Activated CD4-positive, alpha-beta T cell treated with anti-CD3 and anti-CD28 coated beads for 36 hours (primary cell): ENCODE measurements at regions of chr10 and their contacts with region 1.

Region 1: GRCh38 chr10:97278491-97278989 is 13.9 kb downstream of the ARHGAP19 start:
- DNase-seq: no peak
- ATAC-seq: peak; percentile 64
- H3K4me3 Mint-ChIP-seq: no peak overlapping the region
- H3K27ac Mint-ChIP-seq: no peak overlapping the region
- H3K4me1 Mint-ChIP-seq: peaks cover 22% of the 10 kb centered on the region
- H3K27me3 Mint-ChIP-seq: no peaks in the 10 kb centered on the region

Region 2: DNA sequence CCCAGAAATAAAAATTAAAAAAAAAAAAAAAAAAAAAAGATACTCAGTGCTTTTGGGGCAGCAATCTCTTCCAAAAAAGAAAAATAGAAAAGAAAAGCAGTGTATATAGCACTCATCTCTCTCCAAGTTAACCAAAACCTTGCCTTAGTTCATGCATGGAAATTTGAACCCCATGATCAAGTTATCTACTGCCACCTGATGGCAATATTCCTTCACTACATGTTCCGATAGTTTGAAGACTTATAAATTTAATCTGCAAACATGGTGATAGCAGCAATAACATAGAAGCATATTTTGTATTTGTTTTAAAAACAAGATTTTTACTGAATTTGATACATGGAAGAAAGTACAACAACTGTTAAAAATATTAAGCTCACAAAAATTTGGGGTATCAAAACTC is 44.1 kb before region 1 on chr10:
- CTCF ChIA-PET with region 1: interaction called, 14 read pairs
- POLR2A ChIA-PET with region 1: no interaction called
- intact Hi-C with region 1: no loop called
- DNase-seq: no peak
- ATAC-seq: no peak
- H3K4me3 Mint-ChIP-seq: no peak overlapping the region
- H3K27ac Mint-ChIP-seq: no peak overlapping the region
- H3K4me1 Mint-ChIP-seq: peaks cover 17% of the 10 kb centered on the region
- H3K27me3 Mint-ChIP-seq: no peaks in the 10 kb centered on the region

Region 3: DNA sequence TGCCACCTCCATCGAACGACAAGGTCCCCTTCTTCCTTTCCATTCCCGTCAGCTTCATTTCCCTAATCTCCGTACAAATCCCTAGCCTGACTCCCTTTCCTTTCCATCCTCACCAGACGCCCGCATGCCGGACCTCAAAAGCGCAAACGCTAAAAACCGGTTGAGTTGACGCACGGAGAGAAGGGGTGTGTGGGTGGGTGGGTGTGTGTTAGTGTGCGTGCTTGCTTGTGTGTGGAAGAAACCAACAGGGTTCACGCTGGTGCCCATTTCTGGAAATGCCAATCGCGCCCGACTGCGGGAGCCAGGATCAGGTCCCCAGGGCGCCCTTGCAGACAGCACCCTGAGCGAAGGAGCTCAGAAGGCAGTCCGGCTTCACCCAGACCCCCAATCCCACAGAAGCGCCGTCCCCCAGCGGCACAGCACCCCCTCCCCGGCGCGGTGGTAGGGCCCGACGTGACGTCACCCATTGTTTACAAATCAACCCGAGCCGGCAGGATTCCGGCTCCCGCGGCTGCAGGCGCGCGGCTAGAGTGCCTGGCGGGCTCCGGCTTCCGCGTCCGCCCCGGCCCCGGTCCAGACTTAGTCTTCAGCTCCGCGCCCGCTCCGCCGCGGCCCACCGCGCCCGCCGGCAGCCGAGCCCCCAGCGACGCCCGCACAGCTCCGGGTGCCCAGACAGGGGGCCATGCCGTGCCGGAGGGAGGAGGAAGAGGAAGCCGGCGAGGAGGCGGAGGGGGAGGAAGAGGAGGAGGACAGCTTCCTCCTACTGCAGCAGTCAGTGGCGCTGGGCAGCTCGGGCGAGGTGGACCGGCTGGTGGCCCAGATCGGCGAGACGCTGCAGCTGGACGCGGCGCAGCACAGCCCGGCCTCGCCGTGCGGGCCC is 40.5 kb after region 1 on chr10 and contains the start of gene FRAT1:
- CTCF ChIA-PET with region 1: interaction called, 3 read pairs
- POLR2A ChIA-PET with region 1: no interaction called
- intact Hi-C with region 1: loop called in 1 of 2 experiments (anchors 2 kb)
- DNase-seq: peak; percentile 92
- ATAC-seq: peak; percentile 64
- H3K4me3 Mint-ChIP-seq: peak within 1 kb of the TSS; percentile 91
- H3K27ac Mint-ChIP-seq: peak within 1 kb of the TSS; percentile 99
- H3K4me1 Mint-ChIP-seq: peaks cover 29% of the 10 kb centered on the region
- H3K27me3 Mint-ChIP-seq: no peaks in the 10 kb centered on the region
- total RNA-seq, gene FRAT1: 1.3 to 1.8 TPM

Region 4: GRCh38 chr10:97334370-97335175 is 56.0 kb after region 1 on chr10 and contains the start of gene FRAT2:
- CTCF ChIA-PET with region 1: interaction called, 6 read pairs
- POLR2A ChIA-PET with region 1: no interaction called
- intact Hi-C with region 1: loop called in 1 of 2 experiments (anchors 2 kb)
- DNase-seq: peak; percentile 91
- ATAC-seq: peak; percentile 85
- H3K4me3 Mint-ChIP-seq: peak within 1 kb of the TSS; percentile 83
- H3K27ac Mint-ChIP-seq: peak within 1 kb of the TSS; percentile 86
- H3K4me1 Mint-ChIP-seq: peaks cover 40% of the 10 kb centered on the region
- H3K27me3 Mint-ChIP-seq: no peaks in the 10 kb centered on the region
- total RNA-seq, gene FRAT2: 3.0 to 4.3 TPM

Region 5: GRCh38 chr10:97355571-97355975 is 77.0 kb after region 1 on chr10:
- CTCF ChIA-PET with region 1: interaction called, 19 read pairs
- POLR2A ChIA-PET with region 1: no interaction called
- intact Hi-C with region 1: loop called in 1 of 2 experiments (anchors 2 kb)
- DNase-seq: no peak
- ATAC-seq: no peak
- H3K4me3 Mint-ChIP-seq: no peak overlapping the region
- H3K27ac Mint-ChIP-seq: no peak overlapping the region
- H3K4me1 Mint-ChIP-seq: no peaks in the 10 kb centered on the region
- H3K27me3 Mint-ChIP-seq: no peaks in the 10 kb centered on the region

Region 6: GRCh38 chr10:97566339-97566996 is 287.9 kb after region 1 on chr10:
- CTCF ChIA-PET with region 1: no interaction called
- POLR2A ChIA-PET with region 1: no interaction called
- intact Hi-C with region 1: no loop called
- DNase-seq: peak; percentile 24
- ATAC-seq: peak; percentile 86
- H3K4me3 Mint-ChIP-seq: no peak overlapping the region
- H3K27ac Mint-ChIP-seq: no peak overlapping the region
- H3K4me1 Mint-ChIP-seq: peaks cover 5% of the 10 kb centered on the region
- H3K27me3 Mint-ChIP-seq: no peaks in the 10 kb centered on the region

Region 7: DNA sequence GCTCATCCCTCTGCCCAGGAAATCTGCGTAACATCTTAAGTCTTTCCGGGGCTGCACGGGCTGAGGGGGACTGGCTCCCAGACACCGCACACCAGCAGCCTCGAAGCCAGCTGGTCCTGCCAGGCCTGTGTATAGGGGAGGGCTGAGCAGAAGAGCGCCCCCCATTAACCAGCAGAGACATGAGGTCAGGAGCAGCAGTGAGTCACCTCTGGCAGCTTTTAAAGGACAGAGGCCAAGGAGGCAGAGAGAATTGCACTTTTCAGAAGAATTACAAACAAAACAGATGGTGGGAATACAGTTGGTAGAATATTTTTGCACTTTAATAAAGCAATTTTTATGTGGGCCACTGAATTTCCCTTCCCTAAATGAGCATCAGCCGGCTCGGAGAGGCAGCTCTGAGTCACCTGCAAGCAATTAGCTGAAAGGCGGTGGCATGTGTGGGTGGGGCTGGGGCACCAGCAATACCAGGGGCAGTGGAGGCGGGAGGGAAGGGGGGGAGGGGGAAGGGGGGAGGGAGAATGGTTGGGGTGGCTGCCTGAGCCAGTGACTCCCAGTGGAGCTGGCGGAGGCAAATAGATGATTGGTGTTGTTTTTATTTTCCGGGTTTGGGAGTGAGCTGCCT is 610.2 kb after region 1 on chr10:
- CTCF ChIA-PET with region 1: no interaction called
- POLR2A ChIA-PET with region 1: no interaction called
- intact Hi-C with region 1: no loop called
- DNase-seq: peak; percentile 52
- ATAC-seq: peak; percentile 30
- H3K4me3 Mint-ChIP-seq: no peak overlapping the region
- H3K27ac Mint-ChIP-seq: no peak overlapping the region
- H3K4me1 Mint-ChIP-seq: no peaks in the 10 kb centered on the region
- H3K27me3 Mint-ChIP-seq: peaks cover 5% of the 10 kb centered on the region